ENCODE measurements at regions of chr6 and their contacts with region 1.

Region 1: GRCh38 chr6:12605888-12606345 is 110.7 kb upstream of the PHACTR1 start:
- H3K4me3 ChIP-seq: no peak overlapping the region
- H3K27ac ChIP-seq: no peak overlapping the region
- H3K4me1 ChIP-seq: peaks cover 14% of the 10 kb centered on the region
- CTCF ChIP-seq: peak; percentile 55; the same call in 1 of the 2 replicates

Region 2: GRCh38 chr6:11653028-11653583 is 952.8 kb before region 1 on chr6:
- CTCF ChIA-PET with region 1: interaction called, 64 read pairs
- POLR2A ChIA-PET with region 1: no interaction called
- H3K4me3 ChIP-seq: no peak overlapping the region
- H3K27ac ChIP-seq: no peak overlapping the region
- H3K4me1 ChIP-seq: no peaks in the 10 kb centered on the region
- CTCF ChIP-seq: no peak

Region 3: DNA sequence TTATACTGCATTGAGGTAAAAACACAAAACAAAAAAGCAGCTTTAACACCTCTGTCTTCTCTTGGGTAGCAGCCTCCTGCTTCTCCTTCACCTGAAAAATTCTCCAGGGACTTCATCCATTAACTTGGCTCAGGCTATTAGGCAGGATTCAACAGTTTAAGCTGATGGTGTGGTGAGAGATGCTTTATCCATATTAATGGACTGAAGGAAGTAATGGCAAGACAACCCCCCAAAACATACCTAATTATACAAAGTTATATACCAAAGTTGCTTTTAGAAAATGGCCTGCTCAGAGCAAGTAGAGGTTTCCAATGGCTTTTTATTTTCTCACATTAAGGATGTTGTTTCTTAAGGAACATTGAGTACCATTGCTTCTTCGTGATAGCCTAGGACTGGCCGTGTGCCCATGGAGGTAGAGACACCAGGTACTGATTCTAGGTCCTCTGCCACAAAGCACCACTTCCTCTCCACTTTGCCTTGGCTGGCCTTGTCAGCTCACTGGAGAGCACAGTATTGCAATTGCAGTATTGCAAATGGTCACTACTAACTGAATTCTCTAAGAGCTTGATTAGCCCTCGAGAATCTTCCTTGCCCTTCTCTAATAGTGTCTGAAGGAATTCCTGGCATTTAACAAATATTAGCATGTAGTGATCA is 308.4 kb before region 1 on chr6:
- CTCF ChIA-PET with region 1: interaction called, 82 read pairs
- POLR2A ChIA-PET with region 1: no interaction called
- H3K4me3 ChIP-seq: no peak overlapping the region
- H3K27ac ChIP-seq: no peak overlapping the region
- H3K4me1 ChIP-seq: no peaks in the 10 kb centered on the region
- CTCF ChIP-seq: no peak

Region 4: GRCh38 chr6:12483712-12484111 is 122.2 kb before region 1 on chr6:
- CTCF ChIA-PET with region 1: interaction called, 13 read pairs
- POLR2A ChIA-PET with region 1: no interaction called
- H3K4me3 ChIP-seq: no peak overlapping the region
- H3K27ac ChIP-seq: no peak overlapping the region
- H3K4me1 ChIP-seq: no peaks in the 10 kb centered on the region
- CTCF ChIP-seq: no peak

Region 5: DNA sequence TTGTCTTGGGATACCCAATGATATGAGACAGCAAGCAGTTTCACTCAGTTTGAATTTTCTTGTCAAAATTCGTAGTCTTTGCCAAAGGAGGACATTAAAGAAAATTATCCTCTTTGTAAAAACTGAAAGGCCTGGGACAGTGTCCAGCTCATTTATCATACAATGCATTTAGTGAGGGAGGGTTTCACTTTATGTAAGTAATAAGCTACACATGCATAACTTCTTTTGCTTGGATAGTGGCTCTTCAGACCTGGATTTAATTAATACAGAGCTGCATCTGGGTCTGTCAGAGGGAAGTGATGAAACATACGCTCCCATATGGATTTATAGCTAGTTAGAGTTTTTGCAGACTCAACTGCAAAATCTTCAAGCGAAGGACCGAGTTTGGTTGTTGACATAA is 286.2 kb after region 1 on chr6:
- CTCF ChIA-PET with region 1: interaction called, 11 read pairs
- POLR2A ChIA-PET with region 1: no interaction called
- H3K4me3 ChIP-seq: no peak overlapping the region
- H3K27ac ChIP-seq: no peak overlapping the region
- H3K4me1 ChIP-seq: no peaks in the 10 kb centered on the region
- CTCF ChIP-seq: no peak

Region 6: GRCh38 chr6:13146442-13146841 is 540.5 kb after region 1 on chr6:
- CTCF ChIA-PET with region 1: no interaction called
- POLR2A ChIA-PET with region 1: no interaction called
- H3K4me3 ChIP-seq: no peak overlapping the region
- H3K27ac ChIP-seq: no peak overlapping the region
- H3K4me1 ChIP-seq: no peaks in the 10 kb centered on the region
- CTCF ChIP-seq: no peak

Measured in HEK293 (cell line).